Breast epithelium (tissue), 4 donors: ENCODE measurements at regions of chr6 and their contacts with region 1.

Region 1: DNA sequence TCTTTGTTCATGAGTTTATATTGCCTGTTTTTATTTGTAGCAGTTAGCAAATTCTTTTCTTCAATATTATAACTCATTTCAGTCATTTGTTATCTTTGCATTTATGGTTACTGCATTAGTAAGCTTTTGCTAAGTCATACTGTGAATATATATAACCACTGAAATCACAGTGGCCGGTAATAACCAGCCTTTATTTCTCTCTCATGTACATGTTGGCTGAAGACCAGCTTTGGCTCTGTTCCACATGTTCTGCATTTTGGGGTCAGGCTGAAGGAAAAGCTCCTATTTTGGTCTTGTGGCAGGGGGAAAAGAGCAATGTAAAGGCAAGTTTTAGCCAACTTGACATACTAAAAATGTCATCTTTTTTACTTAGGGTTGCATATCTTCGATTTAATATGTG is 276.3 kb downstream of the BCKDHB start:
- DNase-seq: no peak
- H3K4me3 ChIP-seq: no peak overlapping the region
- H3K27ac ChIP-seq: no peak overlapping the region
- H3K4me1 ChIP-seq: no peaks in the 10 kb centered on the region
- H3K27me3 ChIP-seq: no peaks in the 10 kb centered on the region
- CTCF ChIP-seq: no peak
- POLR2A ChIP-seq: no peak

Region 2: GRCh38 chr6:81981812-81982211 is 1599.0 kb after region 1 on chr6:
- intact Hi-C with region 1: loop called (anchors 10 kb)
- DNase-seq: no peak
- H3K4me3 ChIP-seq: no peak overlapping the region
- H3K27ac ChIP-seq: no peak overlapping the region
- H3K4me1 ChIP-seq: no peaks in the 10 kb centered on the region
- H3K27me3 ChIP-seq: no peaks in the 10 kb centered on the region
- CTCF ChIP-seq: no peak
- POLR2A ChIP-seq: no peak